ENCODE measurements at regions of chr6 and their contacts with region 1.

Region 1: GRCh38 chr6:35731736-35732532 is 4.9 kb upstream of the ARMC12 start:
- DNase-seq: peak; percentile 67
- ATAC-seq: peak; percentile 70
- H3K4me3 ChIP-seq: peak overlapping the region; percentile 86
- H3K27ac ChIP-seq: peak overlapping the region; percentile 89
- H3K4me1 ChIP-seq: peaks cover 44% of the 10 kb centered on the region
- H3K27me3 ChIP-seq: no peaks in the 10 kb centered on the region
- CTCF ChIP-seq: peak in 2 of 3 experiments; percentile 1 to 22; a peak in 1 of 6 replicates
- EP300 ChIP-seq: peak; percentile 33 to 68; a peak in 1 of 4 replicates
- POLR2A ChIP-seq: peak; percentile 70
- RAD21 ChIP-seq: no peak

Region 2: GRCh38 chr6:35297601-35298481 is 434.1 kb before region 1 on chr6 and contains the start of gene DEF6:
- CTCF ChIA-PET with region 1: interaction called, 5 read pairs
- POLR2A ChIA-PET with region 1: no interaction called
- RAD21 ChIA-PET with region 1: interaction called, 8 read pairs
- SMC1A ChIA-PET with region 1: interaction called, 3 read pairs
- in situ Hi-C with region 1: no loop called
- intact Hi-C with region 1: loop called (anchors 5 kb)
- DNase-seq: peak; percentile 72
- ATAC-seq: peak; percentile 92
- H3K4me3 ChIP-seq: peak within 1 kb of the TSS; percentile 89
- H3K27ac ChIP-seq: peak within 1 kb of the TSS; percentile 93
- H3K4me1 ChIP-seq: peaks cover 25% of the 10 kb centered on the region
- H3K27me3 ChIP-seq: no peaks in the 10 kb centered on the region
- CTCF ChIP-seq: peak; percentile 92 to 99 (median 97); a peak in 5 of 6 replicates
- EP300 ChIP-seq: peak in 1 of 2 experiments; percentile 45; a peak in 1 of 4 replicates
- POLR2A ChIP-seq: peak; percentile 82
- RAD21 ChIP-seq: peak; percentile 96
- polyA plus RNA-seq, gene DEF6: 3.3 to 5.1 TPM

Region 3: GRCh38 chr6:35569011-35569461 is 162.9 kb before region 1 on chr6:
- CTCF ChIA-PET with region 1: interaction called, 52 read pairs
- POLR2A ChIA-PET with region 1: no interaction called
- RAD21 ChIA-PET with region 1: interaction called, 4 read pairs
- SMC1A ChIA-PET with region 1: interaction called, 28 read pairs
- in situ Hi-C with region 1: no loop called
- intact Hi-C with region 1: no loop called
- DNase-seq: no peak
- ATAC-seq: peak; percentile 87
- H3K4me3 ChIP-seq: no peak overlapping the region
- H3K27ac ChIP-seq: no peak overlapping the region
- H3K4me1 ChIP-seq: no peaks in the 10 kb centered on the region
- H3K27me3 ChIP-seq: no peaks in the 10 kb centered on the region; a peak in 1 of 4 replicates
- CTCF ChIP-seq: peak; percentile 33 to 50 (median 34); a peak in 5 of 6 replicates
- EP300 ChIP-seq: no peak
- POLR2A ChIP-seq: peak; percentile 26; the same call in 1 of the 2 replicates
- RAD21 ChIP-seq: no peak

Region 4: DNA sequence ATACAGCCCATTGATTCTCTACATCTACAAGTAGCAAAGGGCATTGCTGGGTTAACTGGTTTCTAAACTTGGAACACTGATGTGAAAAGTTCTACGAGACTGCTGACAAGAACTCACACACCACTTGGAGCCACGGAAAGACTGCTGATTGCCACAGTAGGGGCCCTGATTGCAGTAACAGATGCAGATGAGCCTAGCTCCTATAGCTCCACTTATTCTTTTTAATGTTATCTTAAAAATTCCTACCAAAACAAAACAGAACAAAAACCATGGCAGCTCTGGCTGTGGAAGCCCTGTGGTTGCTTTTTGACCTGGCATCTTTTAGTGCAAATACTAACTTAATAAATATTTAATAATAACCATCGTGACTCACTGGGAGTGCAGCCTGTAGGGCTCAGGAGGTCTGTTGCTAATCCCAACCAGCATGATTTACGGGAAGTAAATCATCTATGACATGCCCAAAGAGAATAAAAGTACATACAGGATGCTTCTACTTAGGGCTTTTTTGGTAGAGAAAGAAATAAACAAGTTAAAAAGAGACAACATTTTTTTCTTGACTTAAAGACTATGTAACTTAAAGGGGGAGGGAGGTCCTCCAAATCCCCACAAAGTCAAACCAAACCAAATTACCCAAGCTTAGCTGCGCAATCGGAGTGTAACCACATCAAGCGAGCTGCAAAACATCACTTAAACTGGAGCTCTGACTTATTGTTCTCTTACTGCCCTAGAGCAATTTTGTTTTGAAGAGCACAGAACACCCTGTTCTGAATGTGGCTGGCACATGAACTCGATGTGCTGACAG is 130.4 kb before region 1 on chr6:
- CTCF ChIA-PET with region 1: interaction called, 26 read pairs
- POLR2A ChIA-PET with region 1: interaction called, 4 read pairs
- RAD21 ChIA-PET with region 1: interaction called, 5 read pairs
- SMC1A ChIA-PET with region 1: interaction called, 12 read pairs
- in situ Hi-C with region 1: no loop called
- intact Hi-C with region 1: no loop called
- DNase-seq: no peak
- ATAC-seq: no peak
- H3K4me3 ChIP-seq: no peak overlapping the region
- H3K27ac ChIP-seq: peak overlapping the region; percentile 34; the same call in 1 of the 2 replicates
- H3K4me1 ChIP-seq: peaks cover 23% of the 10 kb centered on the region
- H3K27me3 ChIP-seq: no peaks in the 10 kb centered on the region
- CTCF ChIP-seq: no peak
- EP300 ChIP-seq: no peak
- POLR2A ChIP-seq: no peak
- RAD21 ChIP-seq: no peak

Region 5: GRCh38 chr6:35640017-35640664 is 91.8 kb before region 1 on chr6:
- CTCF ChIA-PET with region 1: interaction called, 77 read pairs
- POLR2A ChIA-PET with region 1: interaction called, 4 read pairs
- RAD21 ChIA-PET with region 1: interaction called, 12 read pairs
- SMC1A ChIA-PET with region 1: interaction called, 18 read pairs
- in situ Hi-C with region 1: no loop called
- intact Hi-C with region 1: no loop called
- DNase-seq: no peak
- ATAC-seq: no peak
- H3K4me3 ChIP-seq: no peak overlapping the region
- H3K27ac ChIP-seq: no peak overlapping the region
- H3K4me1 ChIP-seq: peaks cover 5% of the 10 kb centered on the region
- H3K27me3 ChIP-seq: no peaks in the 10 kb centered on the region
- CTCF ChIP-seq: no peak
- EP300 ChIP-seq: no peak
- POLR2A ChIP-seq: no peak
- RAD21 ChIP-seq: no peak

Region 6: GRCh38 chr6:35688581-35689322 is 43.2 kb before region 1 on chr6 and contains the start of gene FKBP5:
- CTCF ChIA-PET with region 1: interaction called, 33 read pairs
- POLR2A ChIA-PET with region 1: interaction called, 12 read pairs
- RAD21 ChIA-PET with region 1: interaction called, 22 read pairs
- SMC1A ChIA-PET with region 1: interaction called, 21 read pairs
- in situ Hi-C with region 1: no loop called
- intact Hi-C with region 1: loop called (anchors 1 kb)
- DNase-seq: peak; percentile 56
- ATAC-seq: peak; percentile 95
- H3K4me3 ChIP-seq: peak within 1 kb of the TSS; percentile 79
- H3K27ac ChIP-seq: peak within 1 kb of the TSS; percentile 62
- H3K4me1 ChIP-seq: peaks cover 5% of the 10 kb centered on the region
- H3K27me3 ChIP-seq: no peaks in the 10 kb centered on the region
- CTCF ChIP-seq: no peak
- EP300 ChIP-seq: no peak
- POLR2A ChIP-seq: peak; percentile 92
- RAD21 ChIP-seq: no peak
- polyA plus RNA-seq, gene FKBP5: 29.0 to 33.5 TPM

Region 7: DNA sequence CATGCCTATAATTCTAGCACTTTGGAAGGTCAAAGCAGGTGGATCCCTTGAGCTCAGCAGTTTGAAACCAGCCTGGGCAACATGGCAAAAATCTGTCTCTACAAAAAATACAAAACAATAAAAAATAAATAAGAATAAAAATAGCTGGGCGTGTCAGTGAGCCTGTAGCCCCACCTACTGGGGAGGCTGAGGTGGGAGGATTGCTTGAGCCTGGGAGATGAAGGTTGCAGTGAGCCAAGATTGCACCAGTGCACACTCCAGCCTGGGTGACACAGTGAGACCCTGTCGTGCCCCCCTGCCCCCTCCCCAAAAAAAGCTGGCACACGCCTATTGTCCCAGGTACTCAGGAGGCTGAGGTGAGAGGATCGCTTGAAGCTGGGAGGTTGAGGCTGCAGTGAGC is 224.0 kb after region 1 on chr6:
- CTCF ChIA-PET with region 1: interaction called, 16 read pairs
- POLR2A ChIA-PET with region 1: no interaction called
- RAD21 ChIA-PET with region 1: interaction called, 5 read pairs
- SMC1A ChIA-PET with region 1: interaction called, 5 read pairs
- in situ Hi-C with region 1: no loop called
- intact Hi-C with region 1: no loop called
- DNase-seq: no peak
- ATAC-seq: no peak
- H3K4me3 ChIP-seq: no peak overlapping the region
- H3K27ac ChIP-seq: no peak overlapping the region
- H3K4me1 ChIP-seq: no peaks in the 10 kb centered on the region
- H3K27me3 ChIP-seq: peaks cover 2 to 3% of the 10 kb centered on the region in 2 experiments; a peak in 2 of 4 replicates
- CTCF ChIP-seq: peak; percentile 12 to 28 (median 21); a peak in 3 of 6 replicates
- EP300 ChIP-seq: no peak
- POLR2A ChIP-seq: no peak
- RAD21 ChIP-seq: peak; percentile 41